Activated CD4-positive, alpha-beta memory T cell treated with anti-CD3 and anti-CD28 coated beads, Interleukin-2, amount 10 ng/mL, durations not matched to agents 7 days and 5 days (primary cell): ENCODE measurements at regions of chr11 and their contacts with region 1.

Region 1: GRCh38 chr11:119205574-119206510 is at the start of gene CBL:
- DNase-seq: peak; percentile 97
- H3K4me3 Mint-ChIP-seq: peak within 1 kb of the TSS; percentile 94
- H3K27ac Mint-ChIP-seq: peak within 1 kb of the TSS; percentile 79
- H3K4me1 Mint-ChIP-seq: peaks cover 34% of the 10 kb centered on the region
- H3K27me3 Mint-ChIP-seq: no peaks in the 10 kb centered on the region
- total RNA-seq, gene CBL: 45.0 to 47.0 TPM

Region 2: DNA sequence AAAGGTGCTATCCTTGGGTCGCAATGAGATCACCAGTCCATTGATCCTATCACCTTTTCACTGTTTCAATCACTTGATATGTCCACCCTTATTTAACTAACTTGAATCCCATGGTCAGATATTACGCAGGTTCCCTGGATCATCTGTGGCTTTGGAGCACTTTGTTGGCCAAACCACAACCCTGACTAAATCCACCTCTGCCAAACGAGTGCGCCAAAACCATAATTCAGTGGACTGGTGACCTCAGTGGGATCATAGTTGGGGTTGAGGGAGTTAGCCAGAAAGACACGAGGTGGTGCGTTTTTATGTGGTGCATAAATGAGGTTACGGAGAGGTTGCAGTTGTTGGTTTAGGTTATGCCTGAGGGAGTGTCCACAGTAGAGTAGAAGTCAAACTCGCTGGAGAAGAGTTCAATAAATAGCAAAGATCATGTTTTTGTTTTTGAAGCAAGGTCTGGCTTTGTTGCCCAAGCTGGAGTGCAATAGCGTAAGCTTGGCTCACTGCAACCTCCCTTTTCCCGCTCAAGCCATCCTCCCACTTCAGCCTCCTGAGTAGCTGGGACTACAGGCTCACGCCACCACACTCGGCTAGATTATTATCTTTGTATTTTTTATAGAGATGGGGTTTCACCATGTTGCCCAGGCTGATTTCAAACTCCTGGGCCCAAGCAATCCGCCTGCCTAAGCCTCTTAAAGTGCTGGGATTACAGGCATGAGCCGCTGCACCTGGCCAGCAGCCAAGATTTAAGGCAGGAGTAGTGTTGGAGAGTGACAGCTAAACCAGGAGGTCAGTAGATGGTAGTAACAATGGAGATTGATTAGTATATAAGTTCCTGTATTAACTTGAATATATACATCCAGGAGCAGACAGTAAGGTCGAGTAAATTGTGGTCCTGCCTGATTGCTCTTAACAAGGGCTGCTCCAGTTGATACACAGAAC is 229.8 kb before region 1 on chr11:
- CTCF ChIA-PET with region 1: no interaction called
- POLR2A ChIA-PET with region 1: no interaction called
- DNase-seq: no peak
- H3K4me3 Mint-ChIP-seq: no peak overlapping the region
- H3K27ac Mint-ChIP-seq: no peak overlapping the region
- H3K4me1 Mint-ChIP-seq: no peaks in the 10 kb centered on the region
- H3K27me3 Mint-ChIP-seq: peaks cover 16% of the 10 kb centered on the region

Region 3: GRCh38 chr11:119095066-119095880 is 110.6 kb before region 1 on chr11:
- CTCF ChIA-PET with region 1: no interaction called
- POLR2A ChIA-PET with region 1: interaction called, 12 read pairs
- DNase-seq: peak; percentile 100
- H3K4me3 Mint-ChIP-seq: peak overlapping the region; percentile 93
- H3K27ac Mint-ChIP-seq: peak overlapping the region; percentile 86
- H3K4me1 Mint-ChIP-seq: peaks cover 70% of the 10 kb centered on the region
- H3K27me3 Mint-ChIP-seq: no peaks in the 10 kb centered on the region

Region 4: GRCh38 chr11:119273721-119274120 is 67.9 kb after region 1 on chr11:
- CTCF ChIA-PET with region 1: interaction called, 13 read pairs
- POLR2A ChIA-PET with region 1: interaction called, 5 read pairs
- DNase-seq: no peak
- H3K4me3 Mint-ChIP-seq: no peak overlapping the region
- H3K27ac Mint-ChIP-seq: no peak overlapping the region
- H3K4me1 Mint-ChIP-seq: no peaks in the 10 kb centered on the region
- H3K27me3 Mint-ChIP-seq: no peaks in the 10 kb centered on the region

Region 5: DNA sequence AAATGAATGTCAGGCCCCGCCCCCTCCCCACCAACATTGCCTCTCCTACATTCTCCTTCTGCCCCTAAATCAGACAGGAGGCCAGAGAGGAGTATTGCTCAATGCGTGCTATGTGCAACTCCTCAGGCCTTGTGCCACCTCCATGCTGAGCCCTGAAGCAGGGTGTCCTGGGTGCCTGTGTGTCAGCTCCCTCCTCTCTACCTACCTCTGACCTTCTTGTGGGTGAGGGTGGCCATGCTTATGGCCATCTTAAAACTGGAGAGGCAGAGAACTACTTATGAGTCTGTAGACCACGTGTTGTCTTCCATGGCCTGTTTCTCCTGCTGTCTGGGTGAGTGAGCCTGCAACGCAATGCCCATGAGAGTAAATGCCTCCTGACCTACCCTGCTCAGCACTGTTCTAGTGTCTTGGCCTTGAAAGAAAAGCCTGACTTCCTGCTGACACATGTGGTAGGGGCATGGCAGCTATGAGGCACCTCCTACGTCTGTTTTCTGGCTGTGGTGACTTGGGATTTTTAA is 100.6 kb after region 1 on chr11:
- CTCF ChIA-PET with region 1: interaction called, 10 read pairs
- POLR2A ChIA-PET with region 1: no interaction called
- DNase-seq: no peak
- H3K4me3 Mint-ChIP-seq: no peak overlapping the region
- H3K27ac Mint-ChIP-seq: peak overlapping the region; percentile 67
- H3K4me1 Mint-ChIP-seq: peaks cover 20% of the 10 kb centered on the region
- H3K27me3 Mint-ChIP-seq: no peaks in the 10 kb centered on the region

Region 6: GRCh38 chr11:119323538-119324033 is 117.7 kb after region 1 on chr11:
- CTCF ChIA-PET with region 1: interaction called, 61 read pairs
- POLR2A ChIA-PET with region 1: interaction called, 22 read pairs
- DNase-seq: peak; percentile 83
- H3K4me3 Mint-ChIP-seq: no peak overlapping the region
- H3K27ac Mint-ChIP-seq: no peak overlapping the region
- H3K4me1 Mint-ChIP-seq: peaks cover 35% of the 10 kb centered on the region
- H3K27me3 Mint-ChIP-seq: peaks cover 9% of the 10 kb centered on the region